Activated T-helper 2 cell treated with anti-CD3 and anti-CD28 coated beads, Interferon-gamma antibody, Interleukin-2, Interleukin-4, amounts not matched to agents 10 μg/mL and 5 μg/mL and 100 μg/mL, durations not matched to agents 14 hours and 24 hours and 36 hours (primary cell): ENCODE measurements at regions of chr17 and their contacts with region 1.

Region 1: DNA sequence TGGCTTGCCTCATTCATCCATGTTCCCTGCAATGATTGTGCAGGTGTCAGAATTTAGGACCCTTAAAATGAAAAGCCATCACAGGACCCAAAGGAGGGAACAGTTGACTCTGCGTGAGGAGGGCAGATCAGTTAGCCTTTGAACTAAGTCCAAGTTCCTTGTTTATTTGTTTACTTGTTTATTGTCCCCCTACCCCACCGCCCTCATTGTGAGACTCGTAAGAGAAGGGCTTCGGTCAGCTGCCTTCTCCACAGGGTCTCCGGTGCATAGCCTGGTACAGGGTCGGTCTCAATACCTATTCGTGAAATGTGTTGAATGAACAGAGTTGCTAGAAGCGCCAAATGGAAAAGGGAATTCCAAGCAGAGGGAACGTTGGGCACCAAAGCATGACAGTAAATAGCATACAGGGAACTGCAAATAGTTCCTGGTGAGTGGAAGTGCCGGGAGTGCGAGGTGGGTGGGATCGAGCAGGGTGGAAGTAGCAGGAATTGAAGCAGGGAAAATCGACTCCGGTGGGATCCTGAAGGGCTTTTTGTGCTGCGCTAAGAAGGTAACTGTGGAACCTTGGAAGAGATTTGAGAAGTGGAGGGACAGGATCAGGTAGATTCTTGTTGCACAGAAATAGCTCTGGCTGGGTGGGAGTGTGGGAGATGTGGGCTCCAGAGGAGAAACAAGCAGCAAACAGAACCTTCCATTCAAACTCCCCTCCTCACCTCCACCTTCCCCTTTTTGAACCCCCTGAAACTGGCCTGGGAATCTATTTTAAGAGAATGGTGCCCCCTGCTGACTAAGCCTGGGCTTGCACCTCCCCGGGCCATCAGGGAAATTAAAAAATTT is 12.7 kb downstream of the SLC35B1 start:
- DNase-seq: peak; percentile 46
- H3K4me3 Mint-ChIP-seq: no peak overlapping the region
- H3K27ac Mint-ChIP-seq: peak overlapping the region; percentile 88
- H3K4me1 Mint-ChIP-seq: peaks cover 22% of the 10 kb centered on the region
- H3K27me3 Mint-ChIP-seq: no peaks in the 10 kb centered on the region

Region 2: DNA sequence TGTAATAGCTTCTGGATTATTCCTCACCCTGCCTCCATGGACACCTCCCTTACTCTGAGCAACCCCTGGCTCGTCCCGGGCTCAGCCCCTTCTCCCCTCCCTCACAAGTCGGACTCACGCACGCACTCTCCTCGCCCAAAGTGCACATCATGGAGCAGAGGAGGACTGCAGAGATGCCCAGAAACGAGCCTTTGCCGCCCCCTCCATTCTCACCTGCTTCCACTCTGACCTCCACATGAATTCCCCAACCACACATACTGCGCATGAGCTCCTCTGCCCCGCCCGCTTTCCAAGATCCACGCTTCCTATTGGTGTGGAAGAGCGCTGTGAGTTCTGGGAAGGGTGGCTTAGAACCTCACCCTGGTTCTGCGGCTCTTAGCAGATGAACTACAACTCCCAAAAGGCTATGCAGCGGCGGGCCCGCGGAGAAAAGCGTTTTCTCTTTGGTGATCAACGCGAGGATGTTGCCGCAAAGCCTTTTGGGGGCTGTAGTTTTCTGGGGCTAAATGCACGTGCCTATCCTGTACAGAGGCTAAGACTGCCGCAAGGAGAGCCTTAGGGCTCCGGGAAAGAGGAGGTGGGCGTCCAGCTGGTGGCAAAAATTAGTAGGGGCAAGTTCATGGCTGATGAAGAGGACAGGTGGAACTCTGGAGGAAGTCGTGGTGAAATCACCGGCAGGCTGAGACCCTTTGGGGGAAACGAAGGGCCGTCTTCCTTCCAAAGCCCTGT is 280.3 kb before region 1 on chr17 and contains the start of gene PHB1:
- intact Hi-C with region 1: loop called (anchors 1 kb)
- DNase-seq: peak; percentile 93
- H3K4me3 Mint-ChIP-seq: peak within 1 kb of the TSS; percentile 99
- H3K27ac Mint-ChIP-seq: peak within 1 kb of the TSS; percentile 87
- H3K4me1 Mint-ChIP-seq: peaks cover 10% of the 10 kb centered on the region
- H3K27me3 Mint-ChIP-seq: peaks cover 10% of the 10 kb centered on the region
- total RNA-seq, gene PHB1: 335 and 339 TPM in 2 replicates

Region 3: GRCh38 chr17:49597928-49598655 is 97.0 kb before region 1 on chr17:
- intact Hi-C with region 1: no loop called
- DNase-seq: no peak
- H3K4me3 Mint-ChIP-seq: no peak overlapping the region
- H3K27ac Mint-ChIP-seq: no peak overlapping the region
- H3K4me1 Mint-ChIP-seq: peaks cover 10% of the 10 kb centered on the region
- H3K27me3 Mint-ChIP-seq: no peaks in the 10 kb centered on the region

Region 4: GRCh38 chr17:49646391-49647255 is 48.4 kb before region 1 on chr17:
- intact Hi-C with region 1: loop called (anchors 5 kb)
- DNase-seq: peak; percentile 26
- H3K4me3 Mint-ChIP-seq: no peak overlapping the region
- H3K27ac Mint-ChIP-seq: peak overlapping the region; percentile 62
- H3K4me1 Mint-ChIP-seq: peaks cover 37% of the 10 kb centered on the region
- H3K27me3 Mint-ChIP-seq: no peaks in the 10 kb centered on the region

Region 5: GRCh38 chr17:49715717-49716279 is 20.7 kb after region 1 on chr17:
- intact Hi-C with region 1: loop called (anchors 1 kb)
- DNase-seq: no peak
- H3K4me3 Mint-ChIP-seq: no peak overlapping the region
- H3K27ac Mint-ChIP-seq: peak overlapping the region; percentile 82
- H3K4me1 Mint-ChIP-seq: peaks cover 26% of the 10 kb centered on the region
- H3K27me3 Mint-ChIP-seq: no peaks in the 10 kb centered on the region

Region 6: GRCh38 chr17:49851387-49852291 is 156.6 kb after region 1 on chr17:
- intact Hi-C with region 1: loop called (anchors 5 kb)
- DNase-seq: peak; percentile 53
- H3K4me3 Mint-ChIP-seq: peak overlapping the region; percentile 78
- H3K27ac Mint-ChIP-seq: peak overlapping the region; percentile 67
- H3K4me1 Mint-ChIP-seq: peaks cover 8% of the 10 kb centered on the region
- H3K27me3 Mint-ChIP-seq: peaks cover 10% of the 10 kb centered on the region